ENCODE measurements at regions of chr2 and their contacts with region 1.

Region 1: DNA sequence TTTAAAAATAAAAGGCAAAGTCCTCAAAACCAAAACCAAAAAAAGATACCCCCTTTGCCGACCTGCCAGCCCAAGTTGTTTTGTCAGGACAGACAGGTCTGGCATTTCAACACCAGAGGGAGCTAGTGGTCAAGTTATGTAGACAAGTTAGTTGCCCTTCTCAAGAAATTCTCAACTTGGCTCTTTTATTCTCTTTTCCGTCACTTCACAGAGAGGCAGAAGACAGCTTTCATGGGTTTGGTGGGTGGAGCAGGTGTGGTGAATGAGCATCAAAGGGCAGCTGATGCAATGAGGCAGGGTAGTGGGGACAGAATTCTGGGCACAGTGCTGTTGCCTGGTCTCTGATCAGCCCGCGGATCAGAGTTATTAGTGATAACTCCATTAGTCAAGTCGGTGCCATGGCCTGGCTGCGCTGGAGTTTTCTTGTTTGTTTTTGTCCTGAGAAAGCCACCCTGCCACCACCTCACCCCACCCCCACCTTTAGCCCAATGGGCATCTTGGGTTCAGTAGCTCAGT is 303.7 kb upstream of the EPAS1 start:
- DNase-seq: no peak
- H3K4me3 ChIP-seq: no peak overlapping the region
- H3K27me3 ChIP-seq: no peaks in the 10 kb centered on the region
- CTCF ChIP-seq: peak; percentile 79

Region 2: GRCh38 chr2:46010925-46011490 is 17.5 kb after region 1 on chr2:
- CTCF ChIA-PET with region 1: interaction called, 16 read pairs
- POLR2A ChIA-PET with region 1: no interaction called
- DNase-seq: no peak
- H3K4me3 ChIP-seq: no peak overlapping the region
- H3K27me3 ChIP-seq: no peaks in the 10 kb centered on the region
- CTCF ChIP-seq: peak; percentile 59

Region 3: DNA sequence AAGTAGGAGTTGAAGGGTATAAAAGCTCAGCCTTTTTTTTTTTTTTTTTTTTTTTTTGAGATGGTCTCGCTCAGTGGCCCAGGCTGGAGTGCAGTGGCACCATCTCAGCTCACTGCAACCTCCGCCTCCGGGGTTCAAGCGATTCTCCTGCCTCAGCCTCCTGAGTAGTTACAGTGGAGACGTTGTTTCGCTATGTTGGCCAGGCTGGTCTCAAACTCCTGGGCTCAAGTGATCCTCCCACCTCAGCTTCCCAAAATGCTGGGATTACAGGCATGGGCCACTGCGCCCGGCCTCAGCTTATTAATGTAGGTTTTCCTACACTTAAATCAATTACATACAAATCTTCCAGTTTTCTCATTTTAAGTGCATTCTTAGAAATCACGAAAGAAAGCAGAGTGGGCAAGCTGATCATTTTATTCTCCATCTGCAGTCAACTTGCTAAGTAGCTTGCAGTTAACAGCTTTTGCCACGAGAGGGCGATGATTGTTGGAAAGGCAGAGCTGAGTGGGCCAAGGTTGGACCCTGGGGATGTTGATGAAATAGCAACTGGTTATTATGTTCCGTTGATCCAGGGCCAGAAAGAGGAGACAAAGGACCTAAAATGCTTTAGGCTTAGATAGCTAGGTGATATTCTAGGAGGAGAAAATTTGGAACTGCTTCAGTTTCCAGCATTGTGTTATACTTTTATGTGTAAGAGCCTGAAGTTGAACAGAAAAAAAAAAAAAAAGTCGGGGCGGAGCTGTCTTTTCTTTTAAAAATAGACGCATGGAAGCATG is 69.3 kb after region 1 on chr2:
- CTCF ChIA-PET with region 1: interaction called, 12 read pairs
- POLR2A ChIA-PET with region 1: no interaction called
- DNase-seq: no peak
- H3K4me3 ChIP-seq: no peak overlapping the region
- H3K27me3 ChIP-seq: no peaks in the 10 kb centered on the region
- CTCF ChIP-seq: peak; percentile 89

Region 4: GRCh38 chr2:46241344-46241743 is 247.8 kb after region 1 on chr2:
- CTCF ChIA-PET with region 1: no interaction called
- POLR2A ChIA-PET with region 1: no interaction called
- DNase-seq: no peak
- H3K4me3 ChIP-seq: no peak overlapping the region
- H3K27me3 ChIP-seq: no peaks in the 10 kb centered on the region
- CTCF ChIP-seq: no peak

Region 5: DNA sequence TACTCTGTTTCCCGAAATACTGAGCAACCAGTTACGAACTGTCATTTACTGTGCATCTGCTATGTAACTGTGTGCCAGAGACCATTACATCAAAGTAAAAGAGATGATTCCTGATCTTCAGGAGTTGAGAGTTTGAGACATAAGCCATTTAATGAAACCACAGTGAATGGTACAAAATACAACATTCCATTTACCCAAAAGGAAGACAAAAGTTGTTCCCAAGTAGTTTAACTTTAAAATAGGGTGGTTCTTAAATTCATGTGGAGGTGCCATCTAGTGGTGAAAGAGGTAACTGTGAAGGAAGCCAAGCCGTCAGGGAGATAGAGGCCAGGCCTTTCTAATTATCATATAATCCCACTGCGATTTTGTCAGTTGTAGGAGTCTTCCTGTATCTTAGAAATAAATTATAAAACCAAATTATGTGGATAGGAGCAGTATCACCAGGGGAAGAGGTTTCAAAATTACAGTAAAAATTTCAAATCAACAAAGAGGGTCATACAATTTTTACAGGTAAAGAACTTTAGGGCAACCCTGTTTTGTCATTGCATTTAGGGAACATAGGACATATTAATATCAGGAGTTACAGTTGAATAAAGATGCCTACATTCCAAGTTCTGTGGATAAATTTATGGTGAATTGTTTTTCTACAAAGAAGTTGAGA is 371.4 kb after region 1 on chr2:
- CTCF ChIA-PET with region 1: interaction called, 24 read pairs
- POLR2A ChIA-PET with region 1: no interaction called
- DNase-seq: peak; percentile 9
- H3K4me3 ChIP-seq: no peak overlapping the region
- H3K27me3 ChIP-seq: no peaks in the 10 kb centered on the region
- CTCF ChIP-seq: peak; percentile 74

Region 6: GRCh38 chr2:46461011-46461674 is 467.6 kb after region 1 on chr2:
- CTCF ChIA-PET with region 1: interaction called, 34 read pairs
- POLR2A ChIA-PET with region 1: interaction called, 3 read pairs
- DNase-seq: no peak
- H3K4me3 ChIP-seq: no peak overlapping the region
- H3K27me3 ChIP-seq: no peaks in the 10 kb centered on the region
- CTCF ChIP-seq: peak; percentile 98

Measured in BJ (cell line).